ENCODE measurements at regions of chr5 and their contacts with region 1.

Region 1: GRCh38 chr5:6712577-6713275 is 506 bp upstream of the TENT4A start:
- DNase-seq: peak; percentile 96
- H3K4me3 Mint-ChIP-seq: peak overlapping the region; percentile 83
- H3K27ac Mint-ChIP-seq: peak overlapping the region; percentile 92
- H3K4me1 Mint-ChIP-seq: peaks cover 31% of the 10 kb centered on the region
- H3K27me3 Mint-ChIP-seq: peaks cover 5% of the 10 kb centered on the region

Region 2: GRCh38 chr5:5492087-5492933 is 1220.4 kb before region 1 on chr5:
- CTCF ChIA-PET with region 1: no interaction called
- intact Hi-C with region 1: loop called (anchors 10 kb)
- DNase-seq: peak; percentile 58
- H3K4me3 Mint-ChIP-seq: no peak overlapping the region
- H3K27ac Mint-ChIP-seq: no peak overlapping the region
- H3K4me1 Mint-ChIP-seq: peaks cover 10% of the 10 kb centered on the region
- H3K27me3 Mint-ChIP-seq: peaks cover 10% of the 10 kb centered on the region

Region 3: DNA sequence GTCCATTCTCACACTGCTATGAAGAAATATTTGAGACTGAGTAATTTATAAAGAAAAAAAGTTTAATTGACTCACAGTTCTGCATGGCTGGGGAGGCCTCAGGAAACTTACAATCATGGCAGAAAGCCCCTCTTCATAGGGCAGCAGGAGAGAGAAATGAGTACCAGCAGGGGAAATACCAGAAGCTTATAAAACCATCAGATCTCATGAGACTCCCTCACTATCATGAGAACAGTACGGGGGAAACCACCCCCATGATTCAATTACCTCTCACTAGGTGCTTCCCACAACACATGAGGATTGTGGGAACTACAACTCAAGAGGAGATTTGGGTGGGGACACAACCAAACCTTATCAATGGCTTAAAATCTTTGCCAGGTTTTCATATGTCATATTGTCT is 19.8 kb before region 1 on chr5:
- CTCF ChIA-PET with region 1: interaction called, 4 read pairs
- intact Hi-C with region 1: loop called (anchors 1 kb)
- DNase-seq: peak; percentile 17
- H3K4me3 Mint-ChIP-seq: no peak overlapping the region
- H3K27ac Mint-ChIP-seq: no peak overlapping the region
- H3K4me1 Mint-ChIP-seq: no peaks in the 10 kb centered on the region
- H3K27me3 Mint-ChIP-seq: peaks cover 27% of the 10 kb centered on the region

Region 4: GRCh38 chr5:6737023-6737941 is 24.6 kb after region 1 on chr5:
- CTCF ChIA-PET with region 1: interaction called, 5 read pairs
- intact Hi-C with region 1: loop called (anchors 1 kb)
- DNase-seq: no peak
- H3K4me3 Mint-ChIP-seq: no peak overlapping the region
- H3K27ac Mint-ChIP-seq: peak overlapping the region; percentile 78
- H3K4me1 Mint-ChIP-seq: peaks cover 50% of the 10 kb centered on the region
- H3K27me3 Mint-ChIP-seq: no peaks in the 10 kb centered on the region

Region 5: DNA sequence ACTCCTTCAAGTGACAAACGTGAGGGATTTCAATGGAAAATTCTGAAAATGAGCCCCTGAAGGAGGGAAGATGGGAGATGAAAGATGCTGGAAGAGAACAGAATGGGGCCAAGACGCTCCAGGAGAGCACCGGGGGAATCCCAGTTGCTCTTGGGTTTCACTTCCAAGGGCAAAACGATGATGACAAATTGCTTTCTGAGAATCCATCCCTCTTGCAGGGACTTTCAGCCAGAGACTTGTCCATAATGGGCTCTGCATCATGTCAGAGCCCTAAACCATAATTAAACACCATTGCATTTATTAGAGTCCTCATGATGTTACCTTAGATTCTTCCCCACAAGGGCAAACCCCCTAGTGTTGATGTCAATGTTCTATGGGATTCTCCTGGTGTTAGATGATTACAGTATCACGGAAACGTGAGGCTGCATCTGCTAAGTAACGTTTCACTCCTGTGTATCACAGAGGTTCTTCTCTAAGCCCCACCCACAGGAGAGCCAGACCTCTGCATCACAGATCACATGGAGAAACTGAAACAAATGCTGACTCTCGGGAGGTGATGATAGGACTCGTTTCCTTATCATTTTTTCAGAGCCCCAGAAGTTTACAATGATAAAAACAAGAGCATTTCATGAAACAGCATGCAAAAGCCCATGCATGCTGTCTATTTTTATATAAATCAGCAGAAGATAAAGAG is 114.9 kb after region 1 on chr5:
- CTCF ChIA-PET with region 1: no interaction called
- intact Hi-C with region 1: loop called (anchors 5 kb)
- DNase-seq: peak; percentile 59
- H3K4me3 Mint-ChIP-seq: peak overlapping the region; percentile 11
- H3K27ac Mint-ChIP-seq: no peak overlapping the region
- H3K4me1 Mint-ChIP-seq: peaks cover 31% of the 10 kb centered on the region
- H3K27me3 Mint-ChIP-seq: peaks cover 22% of the 10 kb centered on the region

Measured in activated naive CD4-positive, alpha-beta T cell treated with anti-CD3 and anti-CD28 coated beads for 36 hours (primary cell).